ENCODE measurements at regions of chr14 and their contacts with region 1.

Region 1: DNA sequence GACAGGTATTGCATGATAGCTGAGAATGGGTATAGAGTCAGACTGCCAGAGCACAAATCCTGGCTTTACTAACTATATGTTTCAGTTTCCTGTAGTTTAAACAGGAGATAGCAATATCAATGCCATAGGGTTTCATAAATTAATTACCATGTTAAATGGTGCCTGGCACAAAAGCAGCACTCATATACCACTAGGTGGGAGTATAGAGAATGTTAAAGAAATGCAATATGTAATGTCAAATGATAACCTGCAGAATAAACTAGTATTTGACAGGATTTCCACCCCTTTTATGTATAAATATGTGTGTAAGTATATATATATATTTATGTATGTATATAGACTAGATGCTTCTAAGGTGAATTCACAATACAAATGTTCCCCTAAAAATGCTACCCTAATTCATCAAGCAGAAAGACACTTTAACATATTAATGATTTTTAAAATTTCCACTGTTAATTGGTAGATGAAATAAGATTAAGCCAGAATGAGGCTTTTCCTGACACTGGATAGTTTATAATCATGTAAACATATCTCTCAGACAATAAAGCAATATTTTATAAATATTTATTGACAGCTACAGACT is 8.6 kb downstream of the WDR89 start:
- DNase-seq: no peak
- ATAC-seq: peak; percentile 80
- H3K4me3 Mint-ChIP-seq: no peak overlapping the region
- H3K27ac Mint-ChIP-seq: no peak overlapping the region
- H3K4me1 Mint-ChIP-seq: peaks cover 20% of the 10 kb centered on the region
- H3K27me3 Mint-ChIP-seq: no peaks in the 10 kb centered on the region
- CTCF ChIP-seq: no peak

Region 2: GRCh38 chr14:63388763-63389431 is 244.1 kb before region 1 on chr14:
- CTCF ChIA-PET with region 1: interaction called, 9 read pairs
- POLR2A ChIA-PET with region 1: no interaction called
- intact Hi-C with region 1: loop called (anchors 2 kb)
- DNase-seq: peak; percentile 17
- ATAC-seq: peak; percentile 81
- H3K4me3 Mint-ChIP-seq: no peak overlapping the region
- H3K27ac Mint-ChIP-seq: no peak overlapping the region
- H3K4me1 Mint-ChIP-seq: peaks cover 3% of the 10 kb centered on the region
- H3K27me3 Mint-ChIP-seq: no peaks in the 10 kb centered on the region
- CTCF ChIP-seq: no peak

Region 3: DNA sequence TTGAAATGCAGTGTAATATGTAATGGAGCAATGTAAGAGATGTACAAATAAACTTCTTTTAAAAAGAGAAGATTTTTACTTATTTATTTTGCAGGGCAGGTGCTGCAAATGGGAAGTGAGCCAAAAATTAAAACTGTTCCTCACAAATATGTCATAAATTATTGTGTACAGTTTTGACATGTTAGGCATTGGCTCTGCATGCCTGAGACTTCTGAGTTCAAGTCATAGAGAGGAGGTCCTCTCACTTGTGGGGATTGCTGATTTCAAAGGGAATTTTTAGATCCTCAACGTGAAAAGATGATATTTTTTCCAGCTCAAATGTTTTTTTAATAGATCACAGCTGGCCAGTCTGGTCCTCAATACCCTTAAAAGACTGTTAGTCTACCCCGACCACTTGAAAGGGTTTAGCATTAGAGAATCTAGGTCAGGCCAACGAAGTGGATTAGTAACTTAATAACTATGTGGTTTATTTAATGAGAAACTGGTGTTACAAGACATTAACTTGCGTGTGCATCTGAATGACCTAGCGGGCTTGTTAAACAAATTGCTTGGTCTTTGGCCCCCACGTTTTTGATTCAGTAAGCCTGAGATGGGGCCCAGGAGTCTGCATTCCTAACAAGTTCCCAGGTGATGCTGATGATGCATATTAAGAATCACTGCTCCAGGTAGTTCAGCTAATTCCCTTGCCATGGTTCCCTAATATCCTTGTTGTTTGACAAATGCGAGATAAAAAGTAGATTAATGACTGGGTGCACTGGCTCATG is 39.6 kb after region 1 on chr14:
- CTCF ChIA-PET with region 1: no interaction called
- POLR2A ChIA-PET with region 1: no interaction called
- intact Hi-C with region 1: no loop called
- DNase-seq: no peak
- ATAC-seq: no peak
- H3K4me3 Mint-ChIP-seq: no peak overlapping the region
- H3K27ac Mint-ChIP-seq: no peak overlapping the region
- H3K4me1 Mint-ChIP-seq: no peaks in the 10 kb centered on the region
- H3K27me3 Mint-ChIP-seq: no peaks in the 10 kb centered on the region
- CTCF ChIP-seq: no peak